Dorsolateral prefrontal cortex (tissue), 120 donors: ENCODE measurements at regions of chr1 and their contacts with region 1.

Region 1: DNA sequence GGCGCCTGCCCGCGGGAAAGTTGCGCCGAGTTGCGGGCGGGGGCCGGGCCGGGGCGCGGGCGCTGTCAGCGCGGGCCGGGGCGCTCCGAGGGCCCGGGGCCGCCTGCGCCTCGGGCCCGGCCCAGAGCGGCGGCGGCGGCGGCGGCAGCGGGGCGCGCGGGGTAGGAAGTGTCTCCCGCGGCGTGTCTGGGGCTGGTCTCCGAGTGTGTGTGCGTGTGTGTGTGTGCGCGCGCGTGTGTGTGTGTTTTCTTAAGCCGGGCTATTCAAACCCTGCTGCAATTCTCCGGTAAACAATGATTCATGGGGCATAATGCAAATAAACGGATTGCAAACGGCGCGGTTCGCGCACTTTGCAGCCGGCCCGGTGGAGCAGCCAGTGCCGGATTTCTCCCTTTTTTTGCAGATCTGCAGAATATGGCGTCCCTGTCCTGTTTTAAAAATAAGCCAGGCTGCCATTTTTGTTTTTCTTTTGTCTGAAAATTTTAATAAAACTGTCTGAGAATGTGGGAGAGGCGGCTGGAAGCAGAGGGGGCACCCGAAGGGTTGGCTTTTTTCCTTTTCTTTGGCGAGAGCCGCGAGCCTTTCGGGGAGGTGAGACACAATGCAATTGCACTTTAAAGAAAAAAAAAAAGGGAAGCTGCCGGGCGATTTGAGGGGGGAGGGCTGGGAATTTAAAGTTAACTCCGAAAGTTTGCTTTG is 558 bp downstream of the ZNF362 start:
- DNase-seq: peak in 7 of 10 donors; percentile 26 to 53 (median 44)
- H3K4me3 ChIP-seq: peak overlapping the region; percentile 36 to 85 (median 74)
- H3K27ac ChIP-seq: peak overlapping the region in 58 of 59 donors; percentile 23 to 92 (median 82)
- H3K27me3 ChIP-seq: no peaks in the 10 kb centered on the region
- CTCF ChIP-seq: no peak

Region 2: DNA sequence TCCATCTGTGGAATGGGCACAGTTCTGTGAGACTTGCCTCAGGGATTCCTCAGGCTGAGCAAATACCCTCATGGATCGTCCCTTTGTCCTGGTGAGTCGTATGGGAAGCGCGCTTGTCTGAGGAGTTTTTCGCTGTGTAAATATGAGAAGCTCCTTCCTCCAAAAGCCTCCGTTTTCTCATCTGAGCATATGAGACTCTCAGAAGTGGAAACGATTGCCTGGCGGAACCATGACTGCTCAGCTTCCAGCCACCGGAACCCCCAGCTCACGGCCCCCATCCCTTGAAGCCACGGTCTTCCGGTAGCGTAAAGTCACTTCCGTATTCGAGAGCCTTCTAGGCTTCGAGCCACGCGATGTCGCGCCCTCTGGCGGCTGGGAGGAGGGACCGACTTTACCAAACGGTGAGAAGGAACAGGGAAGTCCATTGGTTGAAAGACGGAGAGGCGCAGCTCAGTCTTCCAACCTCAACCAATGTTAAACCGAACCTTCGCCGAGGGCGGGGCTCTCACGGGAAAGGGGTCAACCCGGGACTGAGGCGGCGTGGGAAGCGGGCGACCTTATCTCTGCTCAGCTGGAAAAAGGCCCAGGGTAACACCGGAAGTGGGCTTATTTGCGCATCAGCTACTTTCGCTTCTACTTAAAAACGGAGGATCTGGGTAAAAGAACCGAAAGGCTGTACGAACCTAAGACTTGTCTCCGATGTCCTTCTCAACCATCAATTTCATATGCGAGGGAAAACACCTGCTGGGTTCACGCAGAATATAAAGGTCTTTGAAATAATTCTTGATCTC is 129.7 kb before region 1 on chr1:
- intact Hi-C with region 1: loop called in 1 of 2 experiments (anchors 5 kb)
- DNase-seq: peak; percentile 92 to 98 (median 97)
- H3K4me3 ChIP-seq: peak overlapping the region; percentile 57 to 96 (median 80)
- H3K27ac ChIP-seq: peak overlapping the region; percentile 71 to 97 (median 90)
- H3K27me3 ChIP-seq: no peaks in the 10 kb centered on the region
- CTCF ChIP-seq: peak; percentile 88 to 99 (median 96)

Region 3: DNA sequence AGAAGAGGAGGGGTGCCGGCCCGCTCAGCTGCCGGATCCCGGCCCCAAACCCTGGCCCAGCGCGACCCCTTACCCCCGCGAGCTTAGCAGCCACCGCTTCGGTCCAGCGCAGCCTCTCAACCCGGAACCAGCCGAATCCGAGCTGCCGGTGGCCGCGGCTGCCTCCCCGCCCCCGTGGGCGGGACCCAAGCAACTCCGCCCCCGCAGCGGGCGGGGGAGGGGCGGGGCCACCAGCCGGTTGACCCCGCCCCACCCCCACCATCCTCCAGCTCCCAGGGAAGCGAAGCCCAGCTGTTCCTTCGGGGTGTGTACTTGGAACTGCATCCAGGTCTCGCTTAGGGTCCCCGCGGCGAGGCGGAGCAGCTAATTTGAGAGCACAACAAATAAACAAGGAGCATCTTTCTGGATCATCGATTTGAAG is 74.9 kb before region 1 on chr1 and contains the start of gene TRIM62:
- intact Hi-C with region 1: loop called (anchors 5 kb)
- DNase-seq: peak; percentile 78 to 90 (median 84)
- H3K4me3 ChIP-seq: peak within 1 kb of the TSS; percentile 59 to 100 (median 82)
- H3K27ac ChIP-seq: peak within 1 kb of the TSS in 56 of 59 donors; percentile 42 to 91 (median 82)
- H3K27me3 ChIP-seq: no peaks in the 10 kb centered on the region
- CTCF ChIP-seq: peak in 12 of 56 donors; percentile 11 to 44 (median 22)
- total RNA-seq, gene TRIM62: 6.7 to 37.6 (median 13.9) TPM

Region 4: DNA sequence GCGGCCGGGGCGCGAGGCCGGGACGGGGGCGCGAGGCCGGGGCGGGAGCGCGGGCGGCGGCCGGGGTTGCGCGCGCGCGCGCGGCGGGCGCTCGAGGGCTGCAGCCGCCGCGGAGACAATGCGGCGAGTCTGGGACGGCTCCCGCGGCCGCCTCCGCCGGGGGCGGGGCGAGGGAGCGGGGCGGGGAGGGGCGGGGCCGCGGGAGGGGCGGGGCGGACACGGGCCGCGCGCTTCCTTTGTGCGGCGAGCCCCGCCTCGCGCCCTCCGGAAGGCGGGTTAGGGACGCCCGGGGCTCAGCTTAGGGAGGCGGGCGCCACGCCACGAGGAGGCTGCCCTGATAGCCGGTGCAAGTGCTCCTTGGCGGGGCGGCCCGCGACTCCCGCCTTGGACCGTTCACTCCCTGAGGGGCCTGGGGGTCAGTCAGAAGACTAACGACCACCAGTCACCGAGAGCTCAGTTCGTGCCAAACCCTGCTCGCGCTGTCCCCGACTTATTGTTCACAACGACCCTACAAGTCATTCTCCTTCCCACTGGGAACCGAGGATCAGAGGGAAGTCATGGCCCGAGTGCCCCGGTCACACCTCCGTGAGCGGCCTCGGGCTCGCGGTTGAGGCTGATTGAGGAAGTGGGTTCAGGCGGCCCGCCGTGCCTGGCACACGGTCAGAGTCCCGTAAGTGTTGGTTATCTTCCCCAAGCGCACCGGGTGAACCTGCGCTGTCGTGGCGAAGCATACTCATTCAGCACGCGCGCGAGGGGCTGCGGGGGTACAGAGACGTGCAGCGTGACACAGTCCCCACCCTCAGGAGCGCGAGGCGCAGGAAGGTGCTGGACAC is 93.1 kb after region 1 on chr1:
- intact Hi-C with region 1: loop called in 1 of 2 experiments (anchors 5 kb)
- DNase-seq: peak; percentile 70 to 88 (median 80)
- H3K4me3 ChIP-seq: peak overlapping the region; percentile 41 to 94 (median 75)
- H3K27ac ChIP-seq: peak overlapping the region; percentile 59 to 99 (median 92)
- H3K27me3 ChIP-seq: no peaks in the 10 kb centered on the region
- CTCF ChIP-seq: peak in 22 of 56 donors; percentile 4 to 34 (median 14)